Activated B cell treated with CpG ODN at 0.5 μM for 24 hours (primary cell): ENCODE measurements at regions of chr13 and their contacts with region 1.

Region 1: GRCh38 chr13:24995226-24995804 is 100.6 kb upstream of the PABPC3 start:
- DNase-seq: no peak
- ATAC-seq: peak; percentile 64
- H3K4me3 Mint-ChIP-seq: no peak overlapping the region
- H3K27ac Mint-ChIP-seq: no peak overlapping the region
- H3K4me1 Mint-ChIP-seq: no peaks in the 10 kb centered on the region
- H3K27me3 Mint-ChIP-seq: peaks cover 23% of the 10 kb centered on the region
- CTCF ChIP-seq: no peak

Region 2: DNA sequence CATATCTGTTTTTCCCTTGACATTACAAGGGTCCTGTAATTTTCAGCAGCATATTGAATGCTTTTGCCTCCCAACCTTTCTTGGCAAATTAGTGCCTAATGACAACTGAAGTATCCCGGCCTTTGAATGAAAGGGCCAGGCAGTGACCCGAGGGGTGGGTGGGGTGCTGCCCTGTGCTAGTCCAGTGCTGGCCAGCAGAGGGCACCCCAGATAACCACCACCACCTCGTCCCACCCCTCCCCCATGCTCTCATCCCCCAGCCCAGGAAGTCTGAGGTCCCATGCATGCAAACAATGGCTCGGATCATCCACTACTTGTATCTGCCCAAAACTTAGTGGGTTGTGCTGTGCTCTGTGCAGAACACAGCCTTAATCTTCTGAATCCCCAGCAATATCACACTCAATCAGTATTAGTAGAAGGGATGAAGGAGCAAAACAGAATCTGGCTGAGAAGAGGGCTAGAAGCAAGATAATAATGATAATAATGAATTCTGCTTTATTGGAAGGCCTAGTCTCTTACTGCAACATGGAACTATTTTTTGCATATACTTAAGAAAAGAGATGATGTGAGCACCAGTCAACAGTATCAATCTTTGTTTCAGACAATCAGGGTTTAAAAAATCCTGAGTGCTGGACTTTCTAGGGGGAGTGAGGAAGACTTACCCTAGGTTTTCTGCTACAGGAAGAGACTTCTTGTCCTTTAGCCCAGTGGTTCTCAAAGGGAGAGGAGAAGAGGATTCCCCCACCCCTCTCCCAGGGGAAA is 311.3 kb before region 1 on chr13:
- CTCF ChIA-PET with region 1: no interaction called
- POLR2A ChIA-PET with region 1: no interaction called
- intact Hi-C with region 1: loop called (anchors 1 kb)
- DNase-seq: peak; percentile 37
- ATAC-seq: peak; percentile 93
- H3K4me3 Mint-ChIP-seq: no peak overlapping the region
- H3K27ac Mint-ChIP-seq: no peak overlapping the region
- H3K4me1 Mint-ChIP-seq: peaks cover 19% of the 10 kb centered on the region
- H3K27me3 Mint-ChIP-seq: peaks cover 34% of the 10 kb centered on the region
- CTCF ChIP-seq: peak; percentile 68

Region 3: DNA sequence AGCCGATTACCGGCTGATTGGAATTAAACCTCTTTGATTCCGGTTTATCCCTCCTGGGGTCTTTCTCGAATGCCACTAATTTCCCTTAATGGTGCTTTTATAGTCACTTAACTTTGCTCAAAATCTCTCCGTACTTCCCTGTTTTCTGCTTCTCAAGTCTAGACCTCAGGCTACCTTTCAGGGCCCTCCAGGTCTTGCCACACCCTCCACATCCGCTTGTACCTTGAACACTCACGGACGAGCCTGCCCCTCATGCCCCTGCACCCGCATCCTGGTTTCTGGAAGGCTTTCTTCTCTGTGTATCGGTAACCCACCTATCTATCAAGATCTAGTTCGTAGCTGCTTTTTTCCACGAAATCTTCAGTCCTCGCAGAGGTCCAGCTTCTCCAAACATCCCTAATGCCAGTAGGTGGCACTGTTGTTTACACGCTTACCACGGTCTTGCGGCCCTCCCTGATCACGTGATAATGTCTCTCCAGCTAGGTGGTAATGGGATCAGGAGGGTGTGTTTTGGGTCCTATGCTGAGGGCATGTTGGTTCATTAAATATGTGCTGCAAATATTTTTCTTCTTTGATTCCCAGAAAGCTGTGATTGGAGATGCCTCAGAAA is 301.3 kb before region 1 on chr13:
- CTCF ChIA-PET with region 1: interaction called, 5 read pairs
- POLR2A ChIA-PET with region 1: no interaction called
- intact Hi-C with region 1: loop called (anchors 1 kb)
- DNase-seq: no peak
- ATAC-seq: peak; percentile 45
- H3K4me3 Mint-ChIP-seq: no peak overlapping the region
- H3K27ac Mint-ChIP-seq: no peak overlapping the region
- H3K4me1 Mint-ChIP-seq: peaks cover 5% of the 10 kb centered on the region
- H3K27me3 Mint-ChIP-seq: peaks cover 34% of the 10 kb centered on the region
- CTCF ChIP-seq: no peak

Region 4: GRCh38 chr13:25037057-25037813 is 41.9 kb after region 1 on chr13:
- CTCF ChIA-PET with region 1: interaction called, 5 read pairs
- POLR2A ChIA-PET with region 1: no interaction called
- intact Hi-C with region 1: loop called (anchors 1 kb)
- DNase-seq: no peak
- ATAC-seq: peak; percentile 82
- H3K4me3 Mint-ChIP-seq: no peak overlapping the region
- H3K27ac Mint-ChIP-seq: no peak overlapping the region
- H3K4me1 Mint-ChIP-seq: peaks cover 3% of the 10 kb centered on the region
- H3K27me3 Mint-ChIP-seq: peaks cover 46% of the 10 kb centered on the region
- CTCF ChIP-seq: peak; percentile 24

Region 5: DNA sequence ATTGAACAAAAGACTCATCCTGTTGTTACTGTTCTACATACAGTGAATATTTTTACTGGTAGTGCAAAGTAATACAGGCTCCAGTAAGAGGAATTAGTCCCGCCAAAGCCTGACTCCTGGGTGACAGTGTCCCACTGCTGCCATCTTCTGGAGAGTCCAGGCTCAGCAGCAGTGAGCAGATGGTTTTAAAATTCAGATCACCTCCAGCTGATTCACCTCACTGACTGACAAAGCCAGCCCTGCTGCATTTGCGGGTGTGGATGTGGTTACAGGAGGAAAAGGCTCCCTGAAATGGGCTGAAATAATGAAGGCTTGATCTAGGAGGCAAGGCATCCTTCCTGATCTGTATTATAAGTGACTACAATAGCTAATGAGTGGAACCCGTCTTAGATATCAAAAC is 118.9 kb after region 1 on chr13:
- CTCF ChIA-PET with region 1: interaction called, 3 read pairs
- POLR2A ChIA-PET with region 1: no interaction called
- intact Hi-C with region 1: loop called (anchors 1 kb)
- DNase-seq: peak; percentile 31
- ATAC-seq: peak; percentile 67
- H3K4me3 Mint-ChIP-seq: no peak overlapping the region
- H3K27ac Mint-ChIP-seq: no peak overlapping the region
- H3K4me1 Mint-ChIP-seq: peaks cover 4% of the 10 kb centered on the region
- H3K27me3 Mint-ChIP-seq: peaks cover 26% of the 10 kb centered on the region
- CTCF ChIP-seq: no peak

Region 6: GRCh38 chr13:25375727-25376358 is 380.5 kb after region 1 on chr13:
- CTCF ChIA-PET with region 1: interaction called, 3 read pairs
- POLR2A ChIA-PET with region 1: no interaction called
- intact Hi-C with region 1: loop called (anchors 2 kb)
- DNase-seq: no peak
- ATAC-seq: no peak
- H3K4me3 Mint-ChIP-seq: no peak overlapping the region
- H3K27ac Mint-ChIP-seq: no peak overlapping the region
- H3K4me1 Mint-ChIP-seq: peaks cover 14% of the 10 kb centered on the region
- H3K27me3 Mint-ChIP-seq: peaks cover 41% of the 10 kb centered on the region
- CTCF ChIP-seq: no peak

Region 7: DNA sequence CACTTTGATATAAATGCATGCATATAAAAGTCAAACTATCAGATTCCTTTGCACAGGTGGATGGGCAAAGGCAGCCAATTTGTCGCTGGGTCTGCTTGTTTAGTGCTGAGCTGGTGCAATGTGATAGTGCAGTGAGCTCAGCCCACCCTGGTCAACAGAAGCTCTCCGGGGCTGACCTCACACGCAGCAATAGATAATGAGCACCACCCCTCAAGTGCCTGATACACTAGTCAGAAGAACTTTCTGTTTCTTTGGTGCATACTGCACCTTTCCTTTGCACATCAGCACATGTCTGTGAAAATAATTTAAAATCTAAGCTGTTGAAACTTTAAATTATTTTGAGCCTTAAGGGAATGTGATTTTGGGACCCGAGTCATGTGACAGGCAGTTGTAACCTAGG is 396.6 kb after region 1 on chr13:
- CTCF ChIA-PET with region 1: no interaction called
- POLR2A ChIA-PET with region 1: no interaction called
- intact Hi-C with region 1: no loop called
- DNase-seq: no peak
- ATAC-seq: no peak
- H3K4me3 Mint-ChIP-seq: no peak overlapping the region
- H3K27ac Mint-ChIP-seq: no peak overlapping the region
- H3K4me1 Mint-ChIP-seq: no peaks in the 10 kb centered on the region
- H3K27me3 Mint-ChIP-seq: peaks cover 10% of the 10 kb centered on the region
- CTCF ChIP-seq: no peak